ENCODE measurements at regions of chr21 and their contacts with region 1.

Region 1: GRCh38 chr21:42524349-42525151 is 10.9 kb downstream of the SLC37A1 start:
- DNase-seq: peak; percentile 90
- ATAC-seq: peak; percentile 83
- H3K4me3 Mint-ChIP-seq: peak overlapping the region; percentile 78
- H3K27ac Mint-ChIP-seq: peak overlapping the region; percentile 95
- H3K4me1 Mint-ChIP-seq: peaks cover 87% of the 10 kb centered on the region
- H3K27me3 Mint-ChIP-seq: no peaks in the 10 kb centered on the region
- CTCF ChIP-seq: no peak

Region 2: DNA sequence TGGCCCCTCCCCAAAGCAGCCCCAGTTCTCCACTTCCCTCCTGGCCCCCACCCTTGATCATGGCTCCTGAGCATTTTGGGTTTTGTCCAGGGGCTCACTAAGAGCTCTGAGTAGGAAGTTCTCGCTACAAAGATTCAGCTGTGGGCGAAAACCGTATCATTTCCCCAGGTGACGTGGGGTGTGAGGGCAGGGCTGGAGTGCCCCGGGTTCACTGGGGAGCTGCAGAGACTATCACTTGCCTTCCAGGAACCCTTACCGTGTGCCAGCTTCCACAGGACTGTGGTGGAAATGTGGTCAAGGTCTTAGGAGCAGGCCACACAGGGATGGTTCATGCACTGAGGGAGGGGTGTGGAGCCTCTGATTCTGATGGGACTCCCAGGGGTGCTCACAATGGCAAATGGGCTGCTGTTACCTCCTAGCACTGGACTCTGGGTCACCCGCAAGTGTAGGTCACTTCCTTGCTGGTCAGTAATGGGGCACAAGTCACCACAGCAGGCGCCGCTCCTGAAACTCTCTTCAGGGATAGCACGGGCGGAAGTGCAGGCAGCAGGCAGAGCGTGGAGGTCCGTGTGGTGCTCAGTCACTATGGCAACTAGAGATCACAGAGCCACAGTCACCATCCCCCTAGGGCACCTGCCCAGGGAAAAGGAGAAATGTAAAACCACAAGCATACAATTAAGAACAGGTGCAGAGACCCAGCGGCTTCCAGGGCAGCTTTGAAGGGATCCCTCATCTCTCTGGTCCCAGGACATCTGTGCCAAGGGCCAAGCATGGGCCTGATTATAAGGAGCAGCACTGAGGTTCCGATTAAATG is 64.0 kb before region 1 on chr21:
- CTCF ChIA-PET with region 1: no interaction called
- POLR2A ChIA-PET with region 1: interaction called, 5 read pairs
- intact Hi-C with region 1: loop called (anchors 1 kb)
- DNase-seq: peak; percentile 62
- ATAC-seq: peak; percentile 60
- H3K4me3 Mint-ChIP-seq: peak overlapping the region; percentile 78
- H3K27ac Mint-ChIP-seq: peak overlapping the region; percentile 98
- H3K4me1 Mint-ChIP-seq: peaks cover 65% of the 10 kb centered on the region
- H3K27me3 Mint-ChIP-seq: no peaks in the 10 kb centered on the region
- CTCF ChIP-seq: no peak

Region 3: DNA sequence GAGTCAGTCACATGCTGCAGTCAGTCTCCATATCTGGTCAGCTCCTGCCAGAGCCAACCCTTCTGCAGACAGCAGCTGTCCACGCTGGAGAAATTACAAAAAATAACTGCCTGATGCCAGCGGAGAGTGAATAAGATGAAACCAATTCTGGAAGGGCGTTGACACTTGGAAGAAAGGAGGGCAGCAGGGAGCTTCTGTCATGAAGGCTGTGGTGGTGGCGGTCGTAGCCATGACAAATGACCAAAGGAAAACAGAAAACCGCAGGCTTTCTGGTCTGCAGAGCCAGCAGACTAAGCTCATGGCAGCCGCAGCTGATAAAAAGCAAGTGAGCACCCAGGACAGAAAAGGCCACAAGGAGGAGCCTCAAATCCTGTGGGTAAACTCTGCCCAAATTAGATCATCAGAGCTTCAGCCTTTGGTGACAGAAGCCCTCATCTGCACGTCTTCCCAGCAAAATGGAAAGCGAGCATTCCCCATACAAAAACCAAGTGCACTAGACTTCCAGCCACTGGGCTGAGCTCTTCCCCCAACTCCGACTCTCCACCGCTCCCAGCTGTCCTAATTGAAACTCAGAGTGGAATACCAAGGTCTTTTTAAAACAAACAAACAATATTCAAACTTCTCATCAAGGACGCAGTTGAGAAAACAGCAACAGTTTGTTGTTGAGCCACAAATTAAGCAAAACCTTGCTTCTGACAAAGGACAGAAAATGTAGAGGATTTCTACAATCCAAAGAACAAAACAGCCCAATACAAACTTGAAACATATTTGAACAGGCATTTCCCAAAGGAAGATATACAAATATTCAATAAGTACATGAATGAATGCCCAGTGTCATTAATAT is 57.2 kb before region 1 on chr21:
- CTCF ChIA-PET with region 1: interaction called, 3 read pairs
- POLR2A ChIA-PET with region 1: interaction called, 4 read pairs
- intact Hi-C with region 1: loop called (anchors 1 kb)
- DNase-seq: peak; percentile 13
- ATAC-seq: no peak
- H3K4me3 Mint-ChIP-seq: peak overlapping the region; percentile 6
- H3K27ac Mint-ChIP-seq: no peak overlapping the region
- H3K4me1 Mint-ChIP-seq: peaks cover 69% of the 10 kb centered on the region
- H3K27me3 Mint-ChIP-seq: peaks cover 3% of the 10 kb centered on the region
- CTCF ChIP-seq: no peak

Region 4: GRCh38 chr21:42474043-42474831 is 50.3 kb before region 1 on chr21:
- CTCF ChIA-PET with region 1: interaction called, 3 read pairs
- POLR2A ChIA-PET with region 1: interaction called, 3 read pairs
- intact Hi-C with region 1: loop called (anchors 1 kb)
- DNase-seq: peak; percentile 36
- ATAC-seq: peak; percentile 95
- H3K4me3 Mint-ChIP-seq: peak overlapping the region; percentile 11
- H3K27ac Mint-ChIP-seq: peak overlapping the region; percentile 36
- H3K4me1 Mint-ChIP-seq: peaks cover 21% of the 10 kb centered on the region
- H3K27me3 Mint-ChIP-seq: peaks cover 12% of the 10 kb centered on the region
- CTCF ChIP-seq: no peak

Region 5: DNA sequence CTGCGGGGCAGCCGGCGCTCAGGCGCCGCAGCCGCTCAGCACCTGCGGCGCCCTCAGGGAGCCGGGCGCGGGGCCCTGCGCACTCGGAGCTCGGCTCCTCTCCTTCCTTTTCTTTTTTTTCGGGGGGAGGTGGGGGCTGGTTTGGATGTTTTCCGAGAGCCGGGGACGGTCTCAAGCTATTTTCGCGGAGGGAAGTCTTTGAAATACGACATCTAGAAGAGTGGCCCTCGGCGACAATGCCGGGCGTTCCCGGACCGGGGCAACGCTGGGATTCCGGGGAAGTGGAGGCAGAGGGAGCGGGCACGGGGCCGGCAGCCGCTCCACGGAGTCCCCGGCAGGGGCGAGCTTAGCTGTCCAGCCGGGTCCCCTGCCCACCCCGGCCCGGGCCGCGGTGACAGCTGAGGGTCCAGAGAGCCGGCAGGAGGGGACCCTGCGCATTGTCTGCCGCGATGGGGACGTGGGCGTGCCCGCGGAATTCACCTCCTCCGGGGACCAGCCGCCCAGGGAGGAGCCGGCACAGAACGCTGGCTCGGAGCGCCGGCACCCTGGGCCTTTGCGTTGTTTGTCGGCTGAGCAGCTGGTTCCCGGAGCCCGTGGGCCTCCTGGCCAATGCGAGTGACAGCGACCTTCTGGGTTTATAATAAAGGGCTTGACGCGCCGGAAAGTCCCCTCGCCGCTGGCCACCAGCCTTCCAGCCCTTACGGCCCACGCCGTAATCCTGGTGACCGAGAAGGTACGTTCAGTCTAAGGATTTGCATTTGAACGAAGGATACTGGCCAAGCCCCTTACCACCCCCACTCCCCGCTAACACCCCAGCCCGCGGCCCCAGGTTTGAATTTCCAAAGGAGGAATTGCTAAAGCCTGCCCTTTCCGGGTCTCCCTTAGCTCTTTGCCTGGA is 10.3 kb before region 1 on chr21:
- CTCF ChIA-PET with region 1: no interaction called
- POLR2A ChIA-PET with region 1: interaction called, 58 read pairs
- intact Hi-C with region 1: loop called (anchors 1 kb)
- DNase-seq: peak; percentile 73
- ATAC-seq: peak; percentile 75
- H3K4me3 Mint-ChIP-seq: peak overlapping the region; percentile 84
- H3K27ac Mint-ChIP-seq: peak overlapping the region; percentile 87
- H3K4me1 Mint-ChIP-seq: peaks cover 43% of the 10 kb centered on the region
- H3K27me3 Mint-ChIP-seq: no peaks in the 10 kb centered on the region
- CTCF ChIP-seq: no peak

Measured in activated B cell treated with CpG ODN at 0.5 μM for 24 hours (primary cell).